Activated T-helper 1 cell treated with anti-CD3 and anti-CD28 coated beads, Interleukin-12 subunit alpha, Interleukin-12 subunit beta, Interleukin-2, Interleukin-4 antibody, amounts not matched to agents 30 ng/mL and 10 ng/mL and 1 ng/mL, durations not matched to agents 14 hours and 24 hours and 36 hours (primary cell): ENCODE measurements at regions of chr19 and their contacts with region 1.

Region 1: DNA sequence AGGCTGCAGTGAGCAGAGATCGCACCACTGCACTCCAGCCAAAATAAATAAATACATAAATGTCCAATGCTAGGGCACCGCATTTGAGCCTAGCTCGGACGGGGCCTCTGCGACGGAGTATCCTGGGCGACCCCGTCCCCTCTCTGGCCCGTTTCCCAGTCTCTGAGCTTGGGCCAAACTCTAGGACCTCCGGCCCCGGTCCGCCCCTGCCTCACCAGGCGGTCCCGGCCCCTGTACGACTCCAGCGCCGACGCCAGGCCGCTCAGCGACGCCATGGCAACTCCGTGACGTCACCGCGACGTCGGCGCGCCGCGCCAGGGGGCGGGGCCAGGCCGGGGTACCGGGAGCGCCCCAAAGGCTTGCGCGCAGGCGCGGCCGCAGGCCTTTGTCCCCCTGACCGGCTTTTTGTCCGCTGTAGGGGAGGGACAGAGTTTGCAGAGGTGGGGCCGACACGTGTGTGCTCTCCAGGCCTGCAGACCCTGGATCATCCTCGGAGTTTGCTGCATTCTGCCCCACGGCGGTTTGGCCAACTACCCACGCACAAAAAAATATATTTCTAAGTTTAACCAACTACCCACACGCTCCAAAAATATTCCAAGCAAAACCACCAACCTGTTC is at the start of gene PEX11G:
- DNase-seq: peak; percentile 92
- H3K4me3 Mint-ChIP-seq: peak within 1 kb of the TSS; percentile 84
- H3K27ac Mint-ChIP-seq: peak within 1 kb of the TSS; percentile 95
- H3K4me1 Mint-ChIP-seq: peaks cover 35% of the 10 kb centered on the region
- H3K27me3 Mint-ChIP-seq: no peaks in the 10 kb centered on the region
- total RNA-seq, gene PEX11G: 1.4 and 1.5 TPM in 2 replicates

Region 2: DNA sequence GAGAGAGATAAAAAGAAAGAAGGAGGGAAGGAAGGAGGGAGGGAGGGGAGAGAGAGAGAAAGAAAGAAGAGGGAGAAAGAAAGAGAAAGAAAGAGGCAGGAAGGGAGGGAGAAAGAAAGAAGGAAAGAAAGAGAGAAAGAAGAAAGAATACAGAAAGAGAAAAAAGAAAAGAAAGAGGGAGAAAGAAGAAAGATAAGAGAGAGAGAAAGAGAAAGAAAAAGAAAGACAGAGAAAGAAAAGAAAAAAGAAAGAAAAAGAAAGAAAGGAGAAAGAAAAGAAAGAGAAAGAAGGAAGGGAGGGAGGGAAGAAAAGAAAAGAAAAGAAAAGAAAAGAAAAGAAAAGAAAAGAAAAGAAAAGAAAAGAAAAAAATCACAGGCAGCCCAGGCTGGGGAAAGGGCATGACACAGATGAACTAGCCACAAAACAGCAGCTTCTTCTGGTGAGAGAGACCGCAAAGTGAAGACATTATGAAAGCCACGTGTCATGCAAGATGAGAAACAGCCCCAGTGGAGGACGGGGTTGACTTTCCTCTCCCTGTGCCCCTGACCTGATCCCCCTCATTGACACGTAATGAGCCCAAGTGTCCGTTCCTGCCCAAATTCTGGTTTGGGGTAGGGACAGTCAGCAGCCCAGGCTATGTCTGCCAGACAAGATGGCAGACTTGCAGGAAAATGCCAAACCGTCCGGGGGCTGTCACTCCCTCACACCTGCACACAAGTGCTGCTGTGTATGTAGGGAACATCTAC is 296.7 kb before region 1 on chr19:
- intact Hi-C with region 1: loop called (anchors 2 kb)
- DNase-seq: peak; percentile 37
- H3K4me3 Mint-ChIP-seq: no peak overlapping the region
- H3K27ac Mint-ChIP-seq: peak overlapping the region; percentile 46
- H3K4me1 Mint-ChIP-seq: peaks cover 21% of the 10 kb centered on the region
- H3K27me3 Mint-ChIP-seq: peaks cover 26% of the 10 kb centered on the region

Region 3: GRCh38 chr19:7312816-7313215 is 176.0 kb before region 1 on chr19:
- intact Hi-C with region 1: no loop called
- DNase-seq: no peak
- H3K4me3 Mint-ChIP-seq: no peak overlapping the region
- H3K27ac Mint-ChIP-seq: no peak overlapping the region
- H3K4me1 Mint-ChIP-seq: no peaks in the 10 kb centered on the region
- H3K27me3 Mint-ChIP-seq: no peaks in the 10 kb centered on the region

Region 4: DNA sequence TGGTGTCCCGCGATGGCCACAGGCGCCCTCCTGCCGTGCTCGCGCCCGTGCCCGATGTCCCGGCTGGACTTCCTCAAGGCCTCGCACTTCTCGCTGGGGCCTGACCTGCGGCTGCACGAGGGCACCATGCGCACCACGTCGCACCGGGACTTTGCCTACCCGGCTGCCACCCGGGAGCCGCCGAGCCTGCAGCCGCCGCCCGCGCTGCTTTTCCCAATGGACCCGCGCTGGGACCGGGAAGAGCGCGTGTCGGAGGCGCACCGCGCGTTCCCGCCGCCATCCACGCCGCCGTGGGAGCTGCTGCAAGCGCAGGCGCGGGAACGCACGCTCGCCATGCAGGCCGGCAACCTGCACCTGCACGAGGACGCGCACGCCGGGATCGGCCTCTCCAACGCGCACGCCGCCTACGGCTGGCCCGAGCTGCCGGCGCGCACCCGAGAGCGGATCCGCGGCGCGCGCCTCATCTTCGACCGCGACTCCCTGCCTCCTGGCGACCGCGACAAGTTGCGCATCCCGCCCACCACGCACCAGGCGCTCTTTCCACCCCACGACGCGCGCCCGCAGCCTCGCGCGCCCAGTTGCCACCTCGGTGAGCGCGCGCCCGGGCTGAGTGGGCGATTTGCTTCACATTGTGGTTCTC is 12.1 kb after region 1 on chr19:
- intact Hi-C with region 1: loop called (anchors 1 kb)
- DNase-seq: peak; percentile 41
- H3K4me3 Mint-ChIP-seq: peak overlapping the region; percentile 54
- H3K27ac Mint-ChIP-seq: no peak overlapping the region
- H3K4me1 Mint-ChIP-seq: peaks cover 4% of the 10 kb centered on the region
- H3K27me3 Mint-ChIP-seq: peaks cover 34% of the 10 kb centered on the region

Region 5: DNA sequence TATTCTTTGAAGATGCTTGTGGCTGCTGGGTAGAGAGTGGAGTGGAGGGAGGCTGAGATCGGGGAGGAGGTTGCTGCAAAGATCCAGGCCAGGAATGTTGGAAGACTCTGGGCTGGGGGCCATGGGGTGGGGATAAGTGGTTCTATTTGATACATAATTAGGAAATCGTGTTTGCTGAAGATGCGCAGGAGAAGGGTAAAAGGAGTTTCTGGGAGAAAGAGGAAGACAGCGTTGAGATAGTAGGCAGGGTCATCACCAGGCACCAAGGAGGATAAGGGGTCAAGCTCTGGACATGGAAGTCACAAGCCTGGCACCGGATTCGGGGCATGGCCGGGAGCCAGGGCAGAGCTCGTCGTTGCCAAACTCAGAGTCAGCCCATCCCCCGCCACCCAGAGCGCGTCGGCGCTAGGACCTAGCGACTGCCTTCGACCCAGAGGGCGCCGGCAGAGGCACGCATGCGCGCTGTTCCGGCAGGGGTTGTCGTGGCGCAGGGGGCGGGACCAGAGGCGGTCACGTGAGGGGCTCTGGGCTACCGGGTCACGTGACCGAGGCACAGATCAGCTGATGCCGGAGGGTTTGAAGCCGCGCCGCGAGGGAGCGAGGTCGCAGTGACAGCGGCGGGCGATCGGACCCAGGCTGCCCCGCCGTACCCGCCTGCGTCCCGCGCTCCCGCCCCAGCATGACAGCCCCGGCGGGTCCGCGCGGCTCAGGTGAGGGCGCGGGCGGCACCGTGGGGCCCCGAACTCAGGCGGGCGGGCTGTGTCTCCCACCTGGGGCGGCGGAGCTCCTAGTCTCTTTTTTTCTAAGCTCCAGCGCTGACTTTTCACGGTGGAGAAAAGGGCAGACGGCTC is 33.5 kb after region 1 on chr19 and contains the start of gene MCOLN1:
- intact Hi-C with region 1: loop called (anchors 2 kb)
- DNase-seq: peak; percentile 99
- H3K4me3 Mint-ChIP-seq: peak within 1 kb of the TSS; percentile 80
- H3K27ac Mint-ChIP-seq: peak within 1 kb of the TSS; percentile 89
- H3K4me1 Mint-ChIP-seq: peaks cover 8% of the 10 kb centered on the region
- H3K27me3 Mint-ChIP-seq: peaks cover 8% of the 10 kb centered on the region
- total RNA-seq, gene MCOLN1: 14.0 and 14.4 TPM in 2 replicates

Region 6: DNA sequence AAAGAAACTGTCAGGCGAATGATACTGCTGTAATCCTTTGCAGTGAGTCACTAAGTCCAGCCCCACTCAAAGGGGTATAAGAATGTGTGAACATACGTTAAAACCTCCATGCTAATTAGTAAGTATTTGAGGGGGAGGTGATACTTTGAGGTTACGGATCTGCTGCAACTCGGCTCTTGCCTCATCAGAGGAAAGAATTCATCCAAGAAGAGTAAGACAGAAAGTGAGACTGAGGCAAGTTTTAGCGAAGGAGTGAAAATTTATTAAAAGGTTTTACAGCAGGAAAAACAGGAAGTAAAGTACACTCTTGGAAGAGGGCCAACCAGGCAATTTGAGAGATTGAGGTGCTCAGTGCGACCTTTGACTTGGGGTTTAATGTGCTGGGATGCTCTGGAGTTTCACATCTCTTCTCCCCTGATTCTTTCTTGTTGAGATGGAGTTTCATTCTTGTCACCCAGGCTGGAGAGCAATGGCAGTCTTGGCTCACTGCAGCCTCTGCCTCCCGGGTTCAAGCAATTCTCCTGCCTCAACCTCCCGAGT is 284.0 kb after region 1 on chr19:
- intact Hi-C with region 1: loop called (anchors 1 kb)
- DNase-seq: no peak
- H3K4me3 Mint-ChIP-seq: peak overlapping the region; percentile 8
- H3K27ac Mint-ChIP-seq: peak overlapping the region; percentile 61
- H3K4me1 Mint-ChIP-seq: peaks cover 13% of the 10 kb centered on the region
- H3K27me3 Mint-ChIP-seq: peaks cover 19% of the 10 kb centered on the region

Region 7: GRCh38 chr19:7852851-7853769 is 364.3 kb after region 1 on chr19:
- intact Hi-C with region 1: no loop called
- DNase-seq: peak; percentile 49
- H3K4me3 Mint-ChIP-seq: no peak overlapping the region
- H3K27ac Mint-ChIP-seq: no peak overlapping the region
- H3K4me1 Mint-ChIP-seq: no peaks in the 10 kb centered on the region
- H3K27me3 Mint-ChIP-seq: peaks cover 2% of the 10 kb centered on the region